OCI-LY7 (cell line): ENCODE measurements at regions of chr3 and their contacts with region 1.

Region 1: DNA sequence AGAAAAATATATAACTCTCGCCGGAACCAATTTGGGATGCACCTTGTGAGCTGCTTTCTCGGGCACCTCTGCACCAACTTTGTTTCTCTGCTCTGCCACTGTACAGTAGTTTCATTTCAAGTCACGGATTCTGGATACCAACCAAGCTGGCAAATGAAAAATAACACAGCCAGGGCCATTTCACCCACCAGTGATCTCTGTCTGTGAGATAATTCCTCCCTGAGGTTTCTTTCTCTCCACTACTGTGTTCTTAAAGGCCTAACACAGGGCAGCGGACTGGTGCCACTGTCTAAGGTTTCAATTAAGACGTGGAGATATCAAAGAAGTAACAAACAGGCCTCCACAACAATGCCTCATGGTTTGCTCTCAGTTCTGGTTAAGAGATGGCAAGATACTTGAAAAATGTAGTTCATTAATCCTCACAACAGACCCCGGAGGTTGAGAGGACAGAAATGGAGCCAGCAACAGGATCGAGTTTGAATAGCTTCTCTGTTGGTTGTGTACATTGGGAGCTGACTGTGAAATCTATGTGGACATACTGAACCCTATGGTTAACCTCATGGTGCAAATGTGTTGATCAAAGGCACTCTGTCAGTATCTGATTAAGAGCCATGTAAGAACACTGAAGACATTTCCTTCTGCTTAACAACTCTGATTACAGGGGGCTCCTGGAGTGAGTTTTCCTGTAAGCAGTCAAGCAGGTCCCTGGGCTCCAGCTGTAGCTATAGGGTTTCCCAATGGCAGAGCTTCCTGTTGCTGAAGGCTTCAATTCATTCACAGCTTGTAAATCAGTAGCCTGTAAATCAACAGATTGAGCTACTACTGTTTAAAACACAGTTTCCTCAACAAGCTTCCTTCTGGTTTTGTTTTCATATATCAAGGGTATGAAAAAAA is 470.5 kb downstream of the EPHA3 start:
- DNase-seq: no peak
- H3K4me3 ChIP-seq: no peak overlapping the region
- H3K27ac ChIP-seq: no peak overlapping the region
- H3K4me1 ChIP-seq: no peaks in the 10 kb centered on the region
- CTCF ChIP-seq: no peak

Region 2: DNA sequence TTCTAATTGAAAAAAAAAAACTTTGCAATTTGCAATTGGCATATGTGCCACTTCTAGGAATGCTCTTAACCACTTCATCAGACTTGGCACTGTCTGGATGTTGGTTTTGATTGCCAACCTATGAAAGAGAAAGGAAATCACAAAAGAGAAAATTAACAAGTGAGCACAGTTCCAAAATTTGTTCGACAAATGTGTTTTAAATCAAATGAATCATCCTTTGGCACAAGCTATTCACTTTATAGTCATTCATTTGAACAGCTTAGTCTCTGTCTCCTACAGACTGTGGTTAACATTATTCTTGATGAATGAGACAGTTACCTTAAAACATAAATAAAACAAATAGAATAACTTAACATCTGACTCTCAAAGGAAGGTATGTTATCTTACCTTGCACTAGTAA is 205.4 kb before region 1 on chr3:
- CTCF ChIA-PET with region 1: no interaction called
- POLR2A ChIA-PET with region 1: no interaction called
- intact Hi-C with region 1: no loop called
- DNase-seq: no peak
- H3K4me3 ChIP-seq: no peak overlapping the region
- H3K27ac ChIP-seq: no peak overlapping the region
- H3K4me1 ChIP-seq: no peaks in the 10 kb centered on the region
- CTCF ChIP-seq: no peak

Region 3: GRCh38 chr3:89617706-89618105 is 39.8 kb after region 1 on chr3:
- CTCF ChIA-PET with region 1: no interaction called
- POLR2A ChIA-PET with region 1: no interaction called
- intact Hi-C with region 1: loop called (anchors 2 kb)
- DNase-seq: no peak
- H3K4me3 ChIP-seq: no peak overlapping the region
- H3K27ac ChIP-seq: no peak overlapping the region
- H3K4me1 ChIP-seq: no peaks in the 10 kb centered on the region
- CTCF ChIP-seq: no peak